ENCODE measurements at regions of chr6 and their contacts with region 1.

Region 1: GRCh38 chr6:126422912-126423311 is 83.0 kb downstream of the CENPW start:
- DNase-seq: no peak
- H3K4me3 Mint-ChIP-seq: no peak overlapping the region
- H3K27ac Mint-ChIP-seq: no peak overlapping the region
- H3K4me1 Mint-ChIP-seq: no peaks in the 10 kb centered on the region
- H3K27me3 Mint-ChIP-seq: no peaks in the 10 kb centered on the region
- CTCF ChIP-seq: no peak

Region 2: GRCh38 chr6:126176282-126176681 is 246.6 kb before region 1 on chr6:
- CTCF ChIA-PET with region 1: no interaction called
- intact Hi-C with region 1: loop called (anchors 5 kb)
- DNase-seq: peak; percentile 37
- H3K4me3 Mint-ChIP-seq: no peak overlapping the region
- H3K27ac Mint-ChIP-seq: no peak overlapping the region
- H3K4me1 Mint-ChIP-seq: peaks cover 12% of the 10 kb centered on the region
- H3K27me3 Mint-ChIP-seq: no peaks in the 10 kb centered on the region
- CTCF ChIP-seq: peak; percentile 43

Measured in Calu3 (cell line).